ENCODE measurements at regions of chr5 and their contacts with region 1.

Region 1: DNA sequence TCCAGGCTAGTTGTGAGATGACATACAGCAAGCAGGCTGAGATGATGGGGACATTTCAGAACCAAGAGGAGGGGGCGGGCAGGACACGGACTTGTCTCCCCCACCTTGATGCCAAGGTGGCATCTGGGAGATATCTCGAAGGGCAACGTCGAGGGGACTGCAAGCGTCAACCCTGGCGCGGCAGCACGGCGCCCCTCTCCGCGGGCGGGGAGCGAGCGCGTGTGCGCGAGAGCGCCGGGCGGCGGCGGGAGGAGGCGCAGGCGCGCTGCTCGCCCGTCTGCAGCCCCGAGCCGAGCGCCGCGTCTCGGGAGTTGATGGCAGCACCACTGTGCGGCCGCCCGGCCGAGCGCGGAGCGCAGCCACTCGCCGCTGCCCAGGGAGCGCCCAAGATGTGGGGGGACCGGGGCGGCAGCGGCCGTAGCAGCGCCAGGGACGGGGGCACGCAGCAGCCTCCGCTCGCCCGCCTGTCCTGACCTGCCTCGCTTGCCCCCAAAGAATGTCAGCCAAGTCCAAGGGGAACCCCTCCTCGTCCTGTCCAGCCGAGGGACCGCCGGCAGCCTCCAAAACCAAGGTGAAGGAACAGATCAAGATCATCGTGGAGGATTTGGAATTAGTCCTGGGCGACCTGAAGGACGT is at the start of gene PRR16:
- DNase-seq: peak; percentile 62
- H3K4me3 ChIP-seq: peak within 1 kb of the TSS; percentile 61 to 84 (median 81)
- H3K27ac ChIP-seq: no peak within 1 kb of the TSS
- H3K4me1 ChIP-seq: peaks cover 16% of the 10 kb centered on the region
- H3K27me3 ChIP-seq: peaks cover 1 to 24% of the 10 kb centered on the region in 2 experiments
- CTCF ChIP-seq: peak; percentile 3 to 25
- POLR2A ChIP-seq: no peak
- total RNA-seq, gene PRR16: 0.91 and 2.3 TPM in 2 replicates

Region 2: GRCh38 chr5:120516805-120517204 is 52.7 kb after region 1 on chr5:
- CTCF ChIA-PET with region 1: no interaction called
- POLR2A ChIA-PET with region 1: no interaction called
- dilution Hi-C with region 1: no loop called
- intact Hi-C with region 1: no loop called
- DNase-seq: no peak
- H3K4me3 ChIP-seq: no peak overlapping the region
- H3K27ac ChIP-seq: no peak overlapping the region
- H3K4me1 ChIP-seq: no peaks in the 10 kb centered on the region
- H3K27me3 ChIP-seq: no peaks in the 10 kb centered on the region
- CTCF ChIP-seq: no peak
- POLR2A ChIP-seq: no peak

Region 3: DNA sequence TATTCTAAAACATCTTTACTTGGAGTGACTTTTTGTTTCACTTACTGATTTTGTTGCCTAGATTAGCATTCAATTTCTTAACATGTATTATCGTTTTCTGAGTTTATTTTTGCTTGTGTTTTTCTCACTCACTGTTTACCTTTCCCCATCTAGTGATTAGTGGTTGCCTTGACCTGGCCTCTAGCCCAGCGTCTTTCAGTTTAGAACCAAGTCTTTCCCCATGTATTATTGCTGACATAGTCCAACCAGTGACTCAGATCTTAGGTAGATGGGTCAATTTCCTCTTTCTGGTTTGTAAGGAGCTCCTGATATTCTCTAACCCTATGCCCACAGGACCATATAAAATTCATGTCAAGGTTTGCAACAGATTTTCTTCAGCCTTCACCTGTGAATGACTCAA is 135.5 kb after region 1 on chr5:
- CTCF ChIA-PET with region 1: no interaction called
- POLR2A ChIA-PET with region 1: no interaction called
- dilution Hi-C with region 1: no loop called
- intact Hi-C with region 1: no loop called
- DNase-seq: no peak
- H3K4me3 ChIP-seq: no peak overlapping the region
- H3K27ac ChIP-seq: no peak overlapping the region
- H3K4me1 ChIP-seq: no peaks in the 10 kb centered on the region
- H3K27me3 ChIP-seq: no peaks in the 10 kb centered on the region
- CTCF ChIP-seq: no peak
- POLR2A ChIP-seq: no peak

Region 4: GRCh38 chr5:121870489-121870888 is 1406.4 kb after region 1 on chr5:
- CTCF ChIA-PET with region 1: no interaction called
- POLR2A ChIA-PET with region 1: no interaction called
- dilution Hi-C with region 1: no loop called
- intact Hi-C with region 1: loop called (anchors 2 kb)
- DNase-seq: peak; percentile 7
- H3K4me3 ChIP-seq: no peak overlapping the region
- H3K27ac ChIP-seq: no peak overlapping the region
- H3K4me1 ChIP-seq: no peaks in the 10 kb centered on the region
- H3K27me3 ChIP-seq: no peaks in the 10 kb centered on the region
- CTCF ChIP-seq: no peak
- POLR2A ChIP-seq: no peak

Measured in endothelial cell of umbilical vein (primary cell).